Caco-2 (cell line): ENCODE measurements at regions of chr18 and their contacts with region 1.

Region 1: DNA sequence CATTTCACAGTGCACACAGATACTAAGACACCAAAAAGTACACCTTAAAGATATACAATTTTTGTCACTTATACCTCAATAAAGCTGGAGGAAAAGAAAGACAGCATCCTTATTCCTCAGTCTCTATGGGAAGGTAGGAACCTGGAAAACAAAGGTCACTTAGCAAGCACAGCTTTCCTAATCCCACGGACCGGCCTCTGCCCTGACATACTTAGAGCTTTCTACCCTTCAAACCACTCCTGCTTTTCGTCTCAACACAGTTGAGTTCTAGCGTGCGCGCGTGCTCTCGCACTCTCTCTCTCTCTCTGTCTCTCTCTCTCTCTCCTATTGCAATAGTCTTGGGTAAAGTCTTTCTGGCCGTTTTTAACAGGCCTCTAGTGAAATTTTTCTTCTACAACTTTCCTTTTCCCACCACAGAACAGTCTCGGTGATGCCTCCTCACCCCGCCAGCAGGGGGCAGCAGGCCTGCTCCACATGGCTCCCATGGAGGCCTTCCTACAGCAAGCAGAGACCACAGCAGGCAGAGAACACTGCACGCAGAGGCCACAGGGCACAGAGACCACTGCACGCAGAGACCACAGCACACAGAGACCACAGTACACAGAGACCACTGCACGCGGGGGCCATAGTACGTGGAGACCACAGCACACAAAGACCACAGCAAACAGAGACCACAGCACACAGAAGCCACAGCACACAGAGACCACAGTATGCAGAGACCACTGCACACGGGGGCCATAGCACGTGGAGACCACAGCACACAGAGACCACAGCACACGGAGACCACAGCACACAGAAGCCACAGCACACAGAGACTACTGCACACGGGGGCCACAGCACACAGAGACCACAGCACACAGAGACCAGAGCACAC is 106.9 kb downstream of the FBXO15 start:
- DNase-seq: peak; percentile 32 to 54
- H3K4me3 ChIP-seq: no peak overlapping the region
- H3K4me3 Mint-ChIP-seq: no peak overlapping the region
- H3K27ac Mint-ChIP-seq: no peak overlapping the region
- H3K4me1 ChIP-seq: no peaks in the 10 kb centered on the region
- H3K4me1 Mint-ChIP-seq: no peaks in the 10 kb centered on the region
- H3K27me3 ChIP-seq: no peaks in the 10 kb centered on the region
- H3K27me3 Mint-ChIP-seq: no peaks in the 10 kb centered on the region
- CTCF ChIP-seq: peak; percentile 51 to 63

Region 2: DNA sequence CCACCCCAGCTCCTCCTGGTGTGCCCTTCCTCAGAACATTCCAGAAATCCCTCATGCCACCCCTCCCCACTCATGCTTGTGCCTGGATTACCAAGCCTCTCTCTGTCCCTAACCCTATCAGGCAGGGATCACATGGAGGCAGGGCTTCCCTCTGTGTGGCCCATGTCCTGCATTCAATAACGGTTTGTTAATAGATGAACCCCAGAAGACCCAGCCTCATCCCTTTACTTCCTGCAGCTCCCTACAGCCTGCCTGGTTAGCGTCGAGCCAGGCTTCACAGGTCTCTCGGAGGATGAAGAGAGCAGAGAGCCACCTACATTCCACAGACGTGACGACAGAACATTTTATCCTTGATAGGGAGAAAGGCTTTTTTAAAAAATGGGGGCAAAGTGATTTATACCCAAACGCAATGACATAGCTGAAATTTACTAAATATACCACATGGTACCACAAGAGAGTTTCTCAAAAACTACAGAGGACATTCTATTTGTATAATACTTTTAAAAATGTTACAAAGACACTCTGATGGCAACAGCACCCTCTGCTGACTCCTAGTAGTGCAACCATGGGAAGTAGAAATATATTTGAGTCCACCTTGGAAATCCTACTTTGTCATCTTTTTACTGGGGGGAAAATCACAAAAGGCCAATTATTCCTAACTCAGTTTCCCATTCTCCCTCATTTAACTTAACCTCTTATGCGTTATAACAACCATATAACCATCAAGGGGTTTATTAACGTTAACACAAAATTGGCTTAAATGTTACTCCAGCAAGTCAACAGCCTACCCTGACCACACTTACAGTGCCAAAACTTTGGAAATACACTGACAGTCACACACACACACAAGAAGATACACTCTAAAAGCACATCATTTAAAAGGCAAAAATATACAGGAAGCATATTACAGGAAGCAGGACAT is 76.2 kb after region 1 on chr18:
- CTCF ChIA-PET with region 1: no interaction called
- POLR2A ChIA-PET with region 1: no interaction called
- intact Hi-C with region 1: loop called (anchors 2 kb)
- DNase-seq: no peak
- H3K4me3 ChIP-seq: no peak overlapping the region
- H3K4me3 Mint-ChIP-seq: no peak overlapping the region
- H3K27ac Mint-ChIP-seq: no peak overlapping the region
- H3K4me1 ChIP-seq: no peaks in the 10 kb centered on the region
- H3K4me1 Mint-ChIP-seq: no peaks in the 10 kb centered on the region
- H3K27me3 ChIP-seq: no peaks in the 10 kb centered on the region
- H3K27me3 Mint-ChIP-seq: peaks cover 4% of the 10 kb centered on the region
- CTCF ChIP-seq: peak; percentile 20 to 49

Region 3: GRCh38 chr18:74316259-74317170 is 275.8 kb after region 1 on chr18:
- CTCF ChIA-PET with region 1: no interaction called
- POLR2A ChIA-PET with region 1: no interaction called
- intact Hi-C with region 1: no loop called
- DNase-seq: peak in 1 of 2 experiments; percentile 35
- H3K4me3 ChIP-seq: no peak overlapping the region
- H3K4me3 Mint-ChIP-seq: no peak overlapping the region
- H3K27ac Mint-ChIP-seq: no peak overlapping the region
- H3K4me1 ChIP-seq: peaks cover 12% of the 10 kb centered on the region
- H3K4me1 Mint-ChIP-seq: no peaks in the 10 kb centered on the region
- H3K27me3 ChIP-seq: no peaks in the 10 kb centered on the region
- H3K27me3 Mint-ChIP-seq: no peaks in the 10 kb centered on the region
- CTCF ChIP-seq: no peak

Region 4: DNA sequence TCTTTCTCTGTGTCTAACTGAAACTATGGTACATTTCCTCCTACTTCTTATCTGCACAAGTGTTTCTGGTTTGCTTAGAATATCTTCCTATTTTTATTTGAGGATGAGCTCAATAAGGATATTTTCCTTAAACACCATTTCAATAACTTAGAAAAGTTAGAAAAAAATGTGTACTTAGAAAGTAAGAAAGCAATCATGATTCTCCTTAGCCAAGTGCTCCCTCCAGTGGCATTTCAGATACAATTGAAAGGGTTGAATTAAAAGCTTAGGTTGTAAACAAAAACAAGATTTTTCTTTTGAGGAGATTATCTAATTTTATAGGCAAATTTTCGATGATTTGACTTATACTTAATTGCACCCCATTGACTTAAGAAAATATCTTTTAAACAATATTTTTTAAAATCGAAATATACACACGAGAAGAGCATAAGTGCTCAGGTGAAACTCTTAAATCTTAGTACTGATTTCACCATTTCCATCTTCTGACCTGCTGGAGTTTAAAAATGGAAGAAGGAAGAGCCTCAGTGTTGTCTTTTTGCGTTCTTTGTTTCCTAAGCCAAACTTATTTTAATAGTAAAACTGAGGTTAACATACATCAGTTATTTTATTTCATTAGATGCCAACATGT is 301.8 kb after region 1 on chr18:
- CTCF ChIA-PET with region 1: no interaction called
- POLR2A ChIA-PET with region 1: no interaction called
- intact Hi-C with region 1: loop called (anchors 1 kb)
- DNase-seq: peak in 1 of 2 experiments; percentile 26
- H3K4me3 ChIP-seq: no peak overlapping the region
- H3K4me3 Mint-ChIP-seq: no peak overlapping the region
- H3K27ac Mint-ChIP-seq: no peak overlapping the region
- H3K4me1 ChIP-seq: no peaks in the 10 kb centered on the region
- H3K4me1 Mint-ChIP-seq: peaks cover 3% of the 10 kb centered on the region
- H3K27me3 ChIP-seq: no peaks in the 10 kb centered on the region
- H3K27me3 Mint-ChIP-seq: no peaks in the 10 kb centered on the region
- CTCF ChIP-seq: peak; percentile 24 to 40